ENCODE measurements at regions of chr22 and their contacts with region 1.

Region 1: GRCh38 chr22:19909350-19910179 is 32.0 kb upstream of the COMT start:
- DNase-seq: peak; percentile 64
- ATAC-seq: peak; percentile 96
- H3K4me3 ChIP-seq: no peak overlapping the region
- H3K27ac ChIP-seq: no peak overlapping the region
- H3K4me1 ChIP-seq: peaks cover 10% of the 10 kb centered on the region
- H3K27me3 ChIP-seq: no peaks in the 10 kb centered on the region
- CTCF ChIP-seq: peak; percentile 98
- EP300 ChIP-seq: no peak
- POLR2A ChIP-seq: no peak
- RAD21 ChIP-seq: peak; percentile 95

Region 2: GRCh38 chr22:19663286-19663815 is 246.2 kb before region 1 on chr22:
- CTCF ChIA-PET with region 1: no interaction called
- POLR2A ChIA-PET with region 1: no interaction called
- in situ Hi-C with region 1: no loop called
- intact Hi-C with region 1: no loop called
- DNase-seq: no peak
- ATAC-seq: peak; percentile 54; the same call in 2 of the 3 replicates
- H3K4me3 ChIP-seq: no peak overlapping the region
- H3K27ac ChIP-seq: no peak overlapping the region
- H3K4me1 ChIP-seq: no peaks in the 10 kb centered on the region
- H3K27me3 ChIP-seq: peaks cover 6 to 50% of the 10 kb centered on the region in 2 experiments; a peak in 4 of 5 replicates
- CTCF ChIP-seq: no peak
- EP300 ChIP-seq: no peak
- POLR2A ChIP-seq: no peak
- RAD21 ChIP-seq: no peak

Region 3: DNA sequence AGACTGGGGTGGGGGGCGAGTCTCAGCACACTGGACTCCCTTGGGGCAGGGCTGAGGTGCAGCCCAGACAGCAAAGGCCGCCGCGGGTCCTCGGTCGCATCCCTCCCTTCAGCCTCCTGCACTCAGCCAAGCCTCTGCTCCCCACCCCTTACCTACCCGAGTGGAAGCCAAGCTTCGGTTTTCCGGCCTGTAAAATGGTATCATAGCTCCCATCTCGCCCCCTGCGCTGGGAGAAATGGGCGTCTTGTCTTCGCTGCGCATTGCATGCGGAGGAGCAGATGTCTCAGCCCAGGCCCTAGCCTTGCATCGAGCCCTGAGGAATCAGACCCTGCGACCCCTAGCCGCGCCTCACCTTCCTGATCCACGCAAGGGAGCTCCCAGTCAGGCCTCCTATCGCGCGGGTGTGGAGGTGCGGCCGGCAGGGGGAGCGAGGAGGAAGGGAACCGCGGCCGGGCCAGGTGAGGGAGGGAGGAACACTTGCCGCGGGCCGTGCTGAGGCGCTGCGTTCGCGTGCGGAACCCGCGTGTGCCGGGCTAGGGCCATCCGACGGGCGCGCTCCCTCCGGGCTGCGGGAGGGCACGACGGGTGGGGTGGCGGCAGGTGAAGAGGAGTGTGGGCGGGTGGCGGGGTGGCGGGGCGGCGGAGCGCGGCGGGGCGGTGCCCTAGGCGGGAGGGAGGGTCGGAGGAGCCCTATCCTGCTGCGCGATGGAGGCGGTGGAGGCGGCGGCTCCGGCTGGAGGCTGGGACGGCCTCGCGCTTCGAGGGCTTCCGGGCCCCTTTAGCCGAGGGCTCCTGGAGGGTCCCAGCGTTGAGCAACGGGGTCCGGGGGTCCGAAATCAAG is 153.1 kb before region 1 on chr22:
- CTCF ChIA-PET with region 1: interaction called, 14 read pairs
- POLR2A ChIA-PET with region 1: no interaction called
- in situ Hi-C with region 1: loop called (anchors 10 kb)
- intact Hi-C with region 1: no loop called
- DNase-seq: peak; percentile 35
- ATAC-seq: peak; percentile 64
- H3K4me3 ChIP-seq: peak overlapping the region; percentile 26 to 58 (median 36); a peak in 3 of 6 replicates
- H3K27ac ChIP-seq: no peak overlapping the region
- H3K4me1 ChIP-seq: peaks cover 23% of the 10 kb centered on the region
- H3K27me3 ChIP-seq: peaks cover 12 to 89% of the 10 kb centered on the region in 2 experiments
- CTCF ChIP-seq: peak; percentile 84
- EP300 ChIP-seq: no peak
- POLR2A ChIP-seq: no peak
- RAD21 ChIP-seq: peak; percentile 66; the same call in 1 of the 2 replicates

Region 4: GRCh38 chr22:19824197-19825015 is 85.2 kb before region 1 on chr22:
- CTCF ChIA-PET with region 1: no interaction called
- POLR2A ChIA-PET with region 1: no interaction called
- in situ Hi-C with region 1: no loop called
- intact Hi-C with region 1: loop called (anchors 2 kb)
- DNase-seq: peak; percentile 41
- ATAC-seq: peak; percentile 91
- H3K4me3 ChIP-seq: peak overlapping the region; percentile 11 to 58 (median 34); a peak in 5 of 6 replicates
- H3K27ac ChIP-seq: peak overlapping the region; percentile 77
- H3K4me1 ChIP-seq: peaks cover 48% of the 10 kb centered on the region
- H3K27me3 ChIP-seq: no peaks in the 10 kb centered on the region
- CTCF ChIP-seq: no peak
- EP300 ChIP-seq: peak in 1 of 2 experiments; percentile 49; a peak in 2 of 4 replicates
- POLR2A ChIP-seq: 0 out of 4 replicates have a peak, but pooled peaks of 1 of the 2 experiments have one; percentile 38
- RAD21 ChIP-seq: no peak

Region 5: GRCh38 chr22:19879695-19880506 is 29.7 kb before region 1 on chr22:
- CTCF ChIA-PET with region 1: no interaction called
- POLR2A ChIA-PET with region 1: no interaction called
- in situ Hi-C with region 1: no loop called
- intact Hi-C with region 1: loop called (anchors 1 kb)
- DNase-seq: peak; percentile 12
- ATAC-seq: no peak
- H3K4me3 ChIP-seq: no peak overlapping the region
- H3K27ac ChIP-seq: peak overlapping the region; percentile 45
- H3K4me1 ChIP-seq: peaks cover 34% of the 10 kb centered on the region
- H3K27me3 ChIP-seq: no peaks in the 10 kb centered on the region
- CTCF ChIP-seq: no peak
- EP300 ChIP-seq: no peak
- POLR2A ChIP-seq: no peak
- RAD21 ChIP-seq: no peak